PC-9 (cell line): ENCODE measurements at regions of chr14 and their contacts with region 1.

Region 1: DNA sequence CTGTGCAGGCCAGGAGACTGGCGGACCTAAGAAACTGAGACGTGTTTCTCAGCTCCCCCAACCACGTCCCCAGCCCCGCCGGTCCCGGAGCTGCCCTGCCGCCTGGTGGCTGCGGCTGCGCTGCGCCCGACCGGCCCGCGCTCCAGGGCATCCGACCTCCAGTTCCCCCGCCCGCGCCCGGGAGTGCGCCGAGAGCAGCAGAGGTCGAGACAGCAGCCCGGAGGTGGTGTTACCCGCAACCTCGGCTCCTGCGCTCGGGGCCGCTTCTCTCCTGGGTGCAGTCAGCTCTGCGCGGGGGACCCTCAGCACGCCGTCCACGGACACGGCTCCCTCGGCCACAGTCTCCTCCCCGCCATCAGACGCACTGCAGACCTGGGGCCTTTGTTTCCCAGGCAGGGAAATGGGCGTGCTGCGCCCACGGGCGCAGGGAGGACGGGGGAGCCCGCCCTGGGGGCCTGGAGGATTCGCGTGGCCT is 21.6 kb upstream of the GPR132 start:
- DNase-seq: peak; percentile 73 to 85
- H3K4me3 ChIP-seq: peak overlapping the region; percentile 80
- H3K27ac ChIP-seq: peak overlapping the region; percentile 80
- H3K4me1 ChIP-seq: peaks cover 43% of the 10 kb centered on the region
- H3K27me3 ChIP-seq: no peaks in the 10 kb centered on the region
- CTCF ChIP-seq: peak; percentile 70

Region 2: DNA sequence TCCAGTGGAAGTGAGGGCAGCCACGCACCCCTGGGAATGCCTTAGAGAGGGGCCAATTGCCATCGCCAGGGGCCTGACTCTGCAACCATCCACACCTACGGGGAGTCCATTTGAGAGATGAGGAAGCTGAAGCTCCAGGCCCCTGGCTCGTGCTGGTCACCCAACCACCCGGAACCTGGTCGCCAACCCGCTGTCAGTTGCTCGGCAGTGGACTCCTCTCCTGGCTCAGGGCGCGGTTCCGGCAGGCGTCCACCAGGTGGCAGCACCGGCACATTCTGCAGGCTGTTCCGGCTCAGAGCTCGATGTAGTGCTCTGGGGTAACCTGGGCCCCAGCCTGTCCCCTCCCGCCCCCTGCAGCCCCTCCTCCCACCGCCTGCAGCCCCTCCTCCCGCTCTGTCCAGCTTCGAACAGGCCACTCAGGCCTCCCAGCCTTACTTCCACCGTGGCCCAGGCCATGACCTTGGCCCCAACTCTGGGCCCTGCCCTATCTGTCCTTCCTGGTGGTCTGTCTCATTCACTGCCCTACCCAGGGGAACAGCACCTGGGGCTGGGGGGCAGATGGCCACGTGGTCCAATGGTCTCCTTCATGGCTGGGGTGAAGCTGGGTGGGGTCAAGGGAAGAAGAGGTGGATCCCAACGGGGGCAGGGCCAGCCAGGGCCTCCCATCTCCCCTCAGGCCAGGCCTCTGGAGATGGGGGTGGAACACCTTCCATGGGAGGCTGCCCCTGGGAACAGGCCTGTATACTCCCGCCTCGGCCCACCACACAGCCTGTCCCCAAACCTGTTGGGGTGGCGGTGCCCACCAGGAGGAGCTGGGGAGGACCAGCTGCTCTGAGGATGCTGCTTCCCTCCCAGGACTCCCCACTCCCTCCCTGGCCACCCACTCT is 318.2 kb before region 1 on chr14:
- CTCF ChIA-PET with region 1: no interaction called
- POLR2A ChIA-PET with region 1: interaction called, 29 read pairs
- intact Hi-C with region 1: no loop called
- DNase-seq: peak; percentile 64 to 82
- H3K4me3 ChIP-seq: no peak overlapping the region
- H3K27ac ChIP-seq: no peak overlapping the region
- H3K4me1 ChIP-seq: peaks cover 3% of the 10 kb centered on the region; the same call in 1 of the 2 replicates
- H3K27me3 ChIP-seq: no peaks in the 10 kb centered on the region
- CTCF ChIP-seq: peak; percentile 81

Region 3: GRCh38 chr14:104940526-104941150 is 146.2 kb before region 1 on chr14:
- CTCF ChIA-PET with region 1: no interaction called
- POLR2A ChIA-PET with region 1: no interaction called
- intact Hi-C with region 1: no loop called
- DNase-seq: no peak
- H3K4me3 ChIP-seq: no peak overlapping the region
- H3K27ac ChIP-seq: no peak overlapping the region
- H3K4me1 ChIP-seq: no peaks in the 10 kb centered on the region
- H3K27me3 ChIP-seq: peaks cover 36% of the 10 kb centered on the region
- CTCF ChIP-seq: peak; percentile 56

Region 4: GRCh38 chr14:105165031-105165704 is 78.3 kb after region 1 on chr14:
- CTCF ChIA-PET with region 1: no interaction called
- POLR2A ChIA-PET with region 1: no interaction called
- intact Hi-C with region 1: loop called (anchors 1 kb)
- DNase-seq: peak in 1 of 2 experiments; percentile 58
- H3K4me3 ChIP-seq: no peak overlapping the region
- H3K27ac ChIP-seq: no peak overlapping the region
- H3K4me1 ChIP-seq: peaks cover 28% of the 10 kb centered on the region
- H3K27me3 ChIP-seq: no peaks in the 10 kb centered on the region
- CTCF ChIP-seq: no peak

Region 5: DNA sequence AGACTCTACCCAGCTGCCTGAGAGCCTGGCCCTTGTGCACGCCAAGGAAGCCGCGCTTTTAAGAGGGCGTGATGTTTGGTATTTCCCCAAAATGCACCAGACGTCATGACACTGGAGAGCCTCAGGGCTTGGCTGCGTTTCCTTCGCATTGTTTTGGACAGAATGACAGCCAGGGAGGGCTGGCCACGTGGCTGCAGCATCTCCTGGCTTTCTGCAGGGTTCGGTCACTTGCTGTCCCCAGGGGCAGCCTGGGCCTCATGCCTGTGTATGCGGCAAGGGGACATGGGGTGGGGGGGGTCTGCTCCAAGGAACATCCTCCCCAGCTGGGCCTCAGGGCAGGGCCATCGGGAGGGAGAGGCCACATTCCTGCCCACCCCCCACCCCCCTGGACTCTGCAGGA is 110.4 kb after region 1 on chr14:
- CTCF ChIA-PET with region 1: no interaction called
- POLR2A ChIA-PET with region 1: no interaction called
- intact Hi-C with region 1: loop called (anchors 2 kb)
- DNase-seq: peak; percentile 37 to 55
- H3K4me3 ChIP-seq: no peak overlapping the region
- H3K27ac ChIP-seq: no peak overlapping the region
- H3K4me1 ChIP-seq: peaks cover 14% of the 10 kb centered on the region
- H3K27me3 ChIP-seq: peaks cover 19% of the 10 kb centered on the region; the same call in 1 of the 2 replicates
- CTCF ChIP-seq: no peak

Region 6: GRCh38 chr14:105351920-105352851 is 265.3 kb after region 1 on chr14:
- CTCF ChIA-PET with region 1: no interaction called
- POLR2A ChIA-PET with region 1: no interaction called
- intact Hi-C with region 1: loop called (anchors 2 kb)
- DNase-seq: peak; percentile 79 to 83
- H3K4me3 ChIP-seq: no peak overlapping the region
- H3K27ac ChIP-seq: no peak overlapping the region
- H3K4me1 ChIP-seq: no peaks in the 10 kb centered on the region
- H3K27me3 ChIP-seq: no peaks in the 10 kb centered on the region
- CTCF ChIP-seq: peak; percentile 85